PC-3 (cell line): ENCODE measurements at regions of chr11 and their contacts with region 1.

Region 1: GRCh38 chr11:47847892-47848635 is at the start of gene NUP160:
- DNase-seq: peak; percentile 61
- ATAC-seq: peak; percentile 89
- H3K4me3 ChIP-seq: peak within 1 kb of the TSS; percentile 85
- H3K27ac ChIP-seq: peak within 1 kb of the TSS; percentile 52
- H3K4me1 ChIP-seq: peaks cover 12% of the 10 kb centered on the region
- H3K27me3 ChIP-seq: no peaks in the 10 kb centered on the region
- CTCF ChIP-seq: no peak
- total RNA-seq, gene NUP160: 23.0 and 25.9 TPM in 2 replicates

Region 2: DNA sequence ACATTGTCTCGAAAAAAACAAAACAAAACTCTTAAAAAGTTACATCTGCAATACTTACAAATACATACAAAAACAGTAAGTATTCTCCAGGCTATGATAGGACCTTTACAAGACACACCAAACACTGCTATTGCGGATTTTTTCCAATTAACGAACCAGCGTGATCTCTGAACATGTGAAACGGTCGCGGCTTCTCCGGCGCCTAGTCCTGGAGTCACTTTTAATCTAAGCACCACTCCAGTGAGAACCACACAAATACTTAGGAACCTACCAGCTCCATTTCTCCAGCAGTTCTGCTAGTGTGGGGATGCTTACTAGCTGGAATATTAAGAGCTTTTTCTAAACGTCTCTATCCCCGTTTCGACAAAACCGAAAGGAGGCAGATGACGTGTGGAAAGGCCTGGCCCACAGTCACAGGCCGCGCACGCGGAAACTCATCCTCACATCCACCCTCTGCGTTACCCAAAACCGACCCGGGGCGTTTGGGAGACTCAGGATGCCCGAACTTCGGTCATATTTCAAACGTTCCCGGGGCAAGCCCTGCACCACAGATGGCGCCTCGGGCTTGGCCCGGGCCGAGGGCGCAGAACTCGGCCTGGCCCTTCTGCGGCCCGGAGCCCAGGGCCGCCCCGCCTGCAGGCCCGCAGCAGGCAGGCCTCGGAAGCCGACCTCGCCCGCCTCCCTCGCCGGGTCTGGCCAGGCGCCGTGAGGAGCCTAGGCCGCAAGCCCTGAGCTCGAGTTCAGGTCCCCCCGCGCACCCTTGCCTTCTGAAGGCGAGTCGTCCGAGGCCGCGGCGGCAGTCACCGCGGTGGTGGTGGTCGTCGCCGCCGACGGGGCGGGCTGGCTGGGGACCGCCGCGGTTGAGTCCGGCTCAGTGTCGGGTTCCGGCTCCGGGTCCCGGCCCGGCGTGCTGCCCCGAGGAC is 81.5 kb before region 1 on chr11:
- CTCF ChIA-PET with region 1: no interaction called
- POLR2A ChIA-PET with region 1: no interaction called
- intact Hi-C with region 1: loop called (anchors 5 kb)
- DNase-seq: peak; percentile 39
- ATAC-seq: peak; percentile 18
- H3K4me3 ChIP-seq: peak overlapping the region; percentile 99
- H3K27ac ChIP-seq: peak overlapping the region; percentile 73
- H3K4me1 ChIP-seq: peaks cover 16% of the 10 kb centered on the region
- H3K27me3 ChIP-seq: no peaks in the 10 kb centered on the region
- CTCF ChIP-seq: no peak

Region 3: GRCh38 chr11:47917643-47918369 is 69.7 kb after region 1 on chr11:
- CTCF ChIA-PET with region 1: no interaction called
- POLR2A ChIA-PET with region 1: no interaction called
- intact Hi-C with region 1: no loop called
- DNase-seq: peak; percentile 7
- ATAC-seq: no peak
- H3K4me3 ChIP-seq: no peak overlapping the region
- H3K27ac ChIP-seq: no peak overlapping the region
- H3K4me1 ChIP-seq: peaks cover 9% of the 10 kb centered on the region
- H3K27me3 ChIP-seq: no peaks in the 10 kb centered on the region
- CTCF ChIP-seq: no peak